ENCODE measurements at regions of chr2 and their contacts with region 1.

Region 1: GRCh38 chr2:181904022-181904632 is 12.6 kb downstream of the ITPRID2 start:
- DNase-seq: peak; percentile 68
- H3K4me3 Mint-ChIP-seq: no peak overlapping the region
- H3K27ac Mint-ChIP-seq: no peak overlapping the region
- H3K4me1 Mint-ChIP-seq: peaks cover 24% of the 10 kb centered on the region
- H3K27me3 Mint-ChIP-seq: no peaks in the 10 kb centered on the region

Region 2: GRCh38 chr2:181742922-181743722 is 161.0 kb before region 1 on chr2:
- intact Hi-C with region 1: loop called (anchors 1 kb)
- DNase-seq: peak; percentile 74
- H3K4me3 Mint-ChIP-seq: no peak overlapping the region
- H3K27ac Mint-ChIP-seq: no peak overlapping the region
- H3K4me1 Mint-ChIP-seq: peaks cover 3% of the 10 kb centered on the region
- H3K27me3 Mint-ChIP-seq: peaks cover 23% of the 10 kb centered on the region

Region 3: DNA sequence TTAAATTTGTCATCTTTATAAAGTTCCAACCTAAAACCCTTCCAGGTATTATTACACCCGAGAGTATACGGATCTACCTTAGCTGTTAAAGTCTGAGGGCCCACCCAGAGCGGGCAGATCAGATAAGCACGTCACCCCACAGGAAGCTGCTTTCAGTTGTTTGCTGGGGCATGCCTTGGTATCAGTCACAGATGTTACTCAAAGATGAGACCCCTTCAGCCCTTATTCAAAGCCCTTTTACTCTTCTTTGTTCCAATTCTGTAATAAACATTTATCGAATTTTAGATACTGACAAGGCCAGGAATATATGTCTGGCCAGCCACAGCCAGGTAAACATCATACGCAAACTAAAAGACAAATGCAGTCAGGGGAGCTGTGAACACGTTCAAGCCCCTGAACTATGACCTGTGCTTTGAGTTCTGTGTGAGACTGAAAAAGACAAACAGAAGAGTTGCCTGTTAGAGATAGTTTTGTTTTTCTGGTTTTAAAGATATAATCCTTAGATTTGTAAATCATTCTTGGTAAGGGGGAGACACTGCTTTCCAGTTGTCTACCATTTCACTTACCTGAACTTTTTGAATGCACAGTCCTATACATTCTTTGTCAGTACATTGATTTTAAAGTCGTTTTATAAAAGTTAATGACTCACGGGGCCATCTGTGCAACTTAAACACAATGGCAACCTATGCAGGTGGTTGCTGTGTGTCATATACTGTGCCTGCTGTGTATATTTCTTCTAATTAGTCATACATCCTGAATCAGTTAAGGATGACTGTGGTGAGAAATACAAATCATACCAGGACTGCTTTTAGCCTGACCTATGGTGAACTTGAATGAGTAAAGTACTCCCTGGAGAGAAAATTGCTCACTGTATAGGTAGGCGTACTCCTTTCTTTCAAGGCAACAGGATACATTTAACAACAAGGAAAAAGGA is 113.1 kb before region 1 on chr2:
- intact Hi-C with region 1: loop called (anchors 2 kb)
- DNase-seq: peak; percentile 62
- H3K4me3 Mint-ChIP-seq: peak overlapping the region; percentile 28
- H3K27ac Mint-ChIP-seq: peak overlapping the region; percentile 79
- H3K4me1 Mint-ChIP-seq: peaks cover 25% of the 10 kb centered on the region
- H3K27me3 Mint-ChIP-seq: no peaks in the 10 kb centered on the region

Region 4: GRCh38 chr2:181850936-181851560 is 53.1 kb before region 1 on chr2:
- intact Hi-C with region 1: no loop called
- DNase-seq: no peak
- H3K4me3 Mint-ChIP-seq: no peak overlapping the region
- H3K27ac Mint-ChIP-seq: no peak overlapping the region
- H3K4me1 Mint-ChIP-seq: peaks cover 4% of the 10 kb centered on the region
- H3K27me3 Mint-ChIP-seq: peaks cover 23% of the 10 kb centered on the region

Region 5: GRCh38 chr2:181946498-181947127 is 42.5 kb after region 1 on chr2:
- intact Hi-C with region 1: loop called (anchors 1 kb)
- DNase-seq: no peak
- H3K4me3 Mint-ChIP-seq: no peak overlapping the region
- H3K27ac Mint-ChIP-seq: no peak overlapping the region
- H3K4me1 Mint-ChIP-seq: no peaks in the 10 kb centered on the region
- H3K27me3 Mint-ChIP-seq: peaks cover 59% of the 10 kb centered on the region

Measured in activated CD4-positive, alpha-beta T cell treated with anti-CD3 and anti-CD28 coated beads, Interleukin-2, amount 10 ng/mL, durations not matched to agents 24 days and 14 days (primary cell).